Mammary epithelial cell (primary cell): ENCODE measurements at regions of chr11 and their contacts with region 1.

Region 1: GRCh38 chr11:2509481-2510001 is 64.7 kb downstream of the KCNQ1 start:
- DNase-seq: no peak
- H3K4me3 ChIP-seq: no peak overlapping the region
- H3K27ac ChIP-seq: no peak overlapping the region
- H3K4me1 ChIP-seq: no peaks in the 10 kb centered on the region
- H3K27me3 ChIP-seq: no peaks in the 10 kb centered on the region
- CTCF ChIP-seq: no peak

Region 2: DNA sequence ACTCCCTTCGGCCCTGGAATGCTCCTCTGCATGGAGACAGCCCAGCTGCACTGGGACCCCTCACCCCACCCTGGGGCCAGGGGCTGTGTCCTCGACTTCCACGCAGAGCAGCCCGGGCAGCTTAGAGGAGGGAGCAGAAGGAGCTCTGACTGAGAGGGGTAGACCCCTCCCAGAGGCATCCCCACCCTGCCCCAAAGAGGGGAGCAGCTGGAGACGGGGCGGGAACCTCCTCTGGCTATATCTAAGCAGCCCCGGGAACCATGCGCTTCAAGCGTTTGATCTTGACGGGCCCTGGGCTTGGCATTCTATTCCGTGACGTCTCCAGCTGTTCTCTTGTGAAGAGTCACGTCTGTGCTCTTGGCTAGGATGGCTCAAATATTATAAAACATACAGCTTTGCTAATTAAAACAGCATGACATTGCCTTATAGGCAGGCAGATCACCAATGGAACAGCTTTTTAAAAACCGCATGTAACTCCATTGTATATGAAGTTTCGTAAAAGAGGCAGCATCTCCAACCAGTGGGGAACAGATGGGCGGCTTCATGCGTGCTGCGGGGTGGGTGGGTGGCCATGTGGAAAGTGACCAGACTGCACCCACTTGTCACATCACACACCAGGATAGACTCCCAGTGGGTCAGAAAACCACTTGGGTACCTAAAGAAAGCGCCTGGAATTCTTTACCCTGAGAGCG is 57.1 kb before region 1 on chr11:
- CTCF ChIA-PET with region 1: no interaction called
- dilution Hi-C with region 1: loop called (anchors 5 kb)
- in situ Hi-C with region 1: no loop called
- intact Hi-C with region 1: no loop called
- DNase-seq: no peak
- H3K4me3 ChIP-seq: no peak overlapping the region
- H3K27ac ChIP-seq: no peak overlapping the region
- H3K4me1 ChIP-seq: peaks cover under 1% of the 10 kb centered on the region
- H3K27me3 ChIP-seq: peaks cover 3% of the 10 kb centered on the region
- CTCF ChIP-seq: no peak

Region 3: GRCh38 chr11:2609345-2609744 is 99.8 kb after region 1 on chr11:
- CTCF ChIA-PET with region 1: no interaction called
- dilution Hi-C with region 1: loop called (anchors 5 kb)
- in situ Hi-C with region 1: no loop called
- intact Hi-C with region 1: no loop called
- DNase-seq: no peak
- H3K4me3 ChIP-seq: no peak overlapping the region
- H3K27ac ChIP-seq: no peak overlapping the region
- H3K4me1 ChIP-seq: no peaks in the 10 kb centered on the region
- H3K27me3 ChIP-seq: peaks cover 11% of the 10 kb centered on the region
- CTCF ChIP-seq: no peak

Region 4: DNA sequence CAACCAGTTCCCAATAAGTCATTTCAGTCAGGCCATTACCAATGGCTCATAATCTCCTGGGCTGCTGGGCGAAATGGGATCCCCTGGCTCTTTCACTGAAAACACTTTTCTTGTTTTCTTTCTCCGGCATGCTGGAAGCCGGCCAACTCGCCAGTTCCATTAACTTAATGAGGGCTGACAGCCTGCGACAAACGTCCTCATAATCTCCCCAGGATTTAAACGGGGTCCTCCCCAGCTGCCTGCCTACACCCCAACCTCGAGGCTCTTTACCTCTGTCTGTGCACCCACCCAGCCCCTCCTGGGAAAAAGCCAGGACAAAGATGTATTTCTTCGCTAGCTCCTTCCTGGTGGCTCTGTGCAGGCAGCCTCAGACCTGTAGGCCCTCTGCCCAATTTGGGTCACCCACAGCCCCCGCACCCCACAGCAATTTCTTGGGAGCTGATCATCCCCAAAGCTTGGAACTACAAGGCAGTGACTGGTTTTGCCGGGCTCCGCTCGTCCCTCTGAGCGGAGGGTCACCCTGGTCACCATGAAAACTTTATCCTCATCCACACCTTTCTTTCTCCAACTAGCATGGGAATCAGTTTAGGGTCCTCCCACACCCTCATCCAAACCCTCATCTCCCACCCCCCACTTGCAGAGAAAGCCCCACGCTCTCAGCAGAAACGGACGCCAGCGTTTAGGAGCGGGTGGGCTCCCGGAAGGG is 241.3 kb after region 1 on chr11:
- CTCF ChIA-PET with region 1: no interaction called
- dilution Hi-C with region 1: no loop called
- in situ Hi-C with region 1: no loop called
- intact Hi-C with region 1: no loop called
- DNase-seq: no peak
- H3K4me3 ChIP-seq: no peak overlapping the region
- H3K27ac ChIP-seq: no peak overlapping the region
- H3K4me1 ChIP-seq: no peaks in the 10 kb centered on the region
- H3K27me3 ChIP-seq: peaks cover 2% of the 10 kb centered on the region
- CTCF ChIP-seq: no peak